ENCODE measurements at regions of chr17 and their contacts with region 1.

Region 1: GRCh38 chr17:65294179-65294720 is 157.1 kb downstream of the RGS9 start:
- DNase-seq: peak; percentile 73
- ATAC-seq: peak; percentile 89
- H3K4me3 Mint-ChIP-seq: no peak overlapping the region
- H3K27ac Mint-ChIP-seq: no peak overlapping the region
- H3K4me1 Mint-ChIP-seq: peaks cover 14% of the 10 kb centered on the region
- H3K27me3 Mint-ChIP-seq: peaks cover 7% of the 10 kb centered on the region

Region 2: GRCh38 chr17:65283704-65284103 is 10.5 kb before region 1 on chr17:
- CTCF ChIA-PET with region 1: interaction called, 10 read pairs
- POLR2A ChIA-PET with region 1: no interaction called
- DNase-seq: no peak
- ATAC-seq: no peak
- H3K4me3 Mint-ChIP-seq: no peak overlapping the region
- H3K27ac Mint-ChIP-seq: no peak overlapping the region
- H3K4me1 Mint-ChIP-seq: no peaks in the 10 kb centered on the region
- H3K27me3 Mint-ChIP-seq: peaks cover 7% of the 10 kb centered on the region

Region 3: GRCh38 chr17:65556014-65556909 is 262.0 kb after region 1 on chr17:
- CTCF ChIA-PET with region 1: interaction called, 41 read pairs
- POLR2A ChIA-PET with region 1: no interaction called
- DNase-seq: peak; percentile 95
- ATAC-seq: peak; percentile 54
- H3K4me3 Mint-ChIP-seq: no peak overlapping the region
- H3K27ac Mint-ChIP-seq: no peak overlapping the region
- H3K4me1 Mint-ChIP-seq: peaks cover 11% of the 10 kb centered on the region
- H3K27me3 Mint-ChIP-seq: peaks cover 7% of the 10 kb centered on the region

Region 4: DNA sequence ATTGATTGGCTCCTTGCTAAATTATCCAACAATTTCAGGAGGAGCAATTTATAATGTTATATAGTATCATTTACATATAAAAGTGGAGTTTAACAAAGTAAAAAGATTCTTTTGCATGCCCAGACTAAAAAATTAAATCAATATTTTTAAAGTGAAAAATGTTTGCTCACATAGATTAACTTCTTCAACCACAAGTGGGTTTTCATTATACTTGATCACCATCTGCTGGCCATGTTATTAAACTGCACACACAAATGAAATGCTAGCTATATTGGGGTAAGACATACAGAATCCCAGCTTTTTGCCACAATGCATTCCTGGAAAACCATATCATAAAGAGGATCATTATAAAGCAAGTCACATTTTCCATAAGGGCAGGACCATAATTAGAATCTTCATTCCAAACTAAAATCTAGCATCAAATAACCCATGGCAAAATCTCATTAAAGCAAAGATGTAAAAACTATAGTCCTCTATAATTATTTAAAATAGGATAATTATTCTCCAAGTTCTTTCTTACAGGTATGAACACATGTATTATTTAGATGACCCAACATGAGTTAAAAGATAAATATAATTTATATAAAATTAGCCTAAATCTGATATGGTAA is 871.4 kb after region 1 on chr17:
- CTCF ChIA-PET with region 1: interaction called, 27 read pairs
- POLR2A ChIA-PET with region 1: no interaction called
- DNase-seq: peak; percentile 37
- ATAC-seq: no peak
- H3K4me3 Mint-ChIP-seq: no peak overlapping the region
- H3K27ac Mint-ChIP-seq: no peak overlapping the region
- H3K4me1 Mint-ChIP-seq: no peaks in the 10 kb centered on the region
- H3K27me3 Mint-ChIP-seq: peaks cover 4% of the 10 kb centered on the region